ENCODE measurements at regions of chr2 and their contacts with region 1.

Region 1: DNA sequence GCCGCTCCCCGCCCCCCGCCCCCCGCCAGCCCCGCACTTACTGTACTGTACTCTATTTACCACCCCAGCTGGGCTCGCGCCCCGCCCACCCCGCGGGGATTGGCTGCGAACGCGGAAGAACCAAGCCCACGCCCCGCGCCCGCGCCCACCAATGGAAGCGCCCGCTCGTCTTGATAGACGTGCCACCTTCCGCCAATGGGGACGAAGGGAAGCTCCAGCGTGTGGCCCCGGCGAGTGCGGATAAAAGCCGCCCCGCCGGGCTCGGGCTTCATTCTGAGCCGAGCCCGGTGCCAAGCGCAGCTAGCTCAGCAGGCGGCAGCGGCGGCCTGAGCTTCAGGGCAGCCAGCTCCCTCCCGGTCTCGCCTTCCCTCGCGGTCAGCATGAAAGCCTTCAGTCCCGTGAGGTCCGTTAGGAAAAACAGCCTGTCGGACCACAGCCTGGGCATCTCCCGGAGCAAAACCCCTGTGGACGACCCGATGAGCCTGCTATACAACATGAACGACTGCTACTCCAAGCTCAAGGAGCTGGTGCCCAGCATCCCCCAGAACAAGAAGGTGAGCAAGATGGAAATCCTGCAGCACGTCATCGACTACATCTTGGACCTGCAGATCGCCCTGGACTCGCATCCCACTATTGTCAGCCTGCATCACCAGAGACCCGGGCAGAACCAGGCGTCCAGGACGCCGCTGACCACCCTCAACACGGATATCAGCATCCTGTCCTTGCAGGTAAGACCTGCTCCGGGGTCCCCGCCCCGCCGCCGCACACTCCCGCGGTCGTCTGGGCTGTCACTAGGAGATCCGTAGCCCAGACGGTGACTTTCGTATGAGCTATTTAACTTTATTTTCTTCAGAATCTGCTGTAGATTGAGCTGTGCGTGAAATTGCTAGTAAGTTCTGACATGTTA is at the start of gene ID2:
- DNase-seq: peak; percentile 100
- ATAC-seq: peak; percentile 67 to 72
- total RNA-seq, gene ID2: 47.5 to 68.2 TPM

Region 2: GRCh38 chr2:7203055-7203467 is 1479.0 kb before region 1 on chr2:
- intact Hi-C with region 1: loop called in 1 of 2 experiments (anchors 5 kb)
- DNase-seq: no peak
- ATAC-seq: peak; percentile 55 to 57

Region 3: GRCh38 chr2:7427293-7428060 is 1254.6 kb before region 1 on chr2:
- intact Hi-C with region 1: loop called in 1 of 2 experiments (anchors 2 kb)
- DNase-seq: no peak
- ATAC-seq: peak in 1 of 2 donors; percentile 46

Region 4: GRCh38 chr2:8004250-8004681 is 677.8 kb before region 1 on chr2:
- intact Hi-C with region 1: loop called in 1 of 2 experiments (anchors 5 kb)
- DNase-seq: no peak
- ATAC-seq: peak; percentile 69 to 88

Region 5: GRCh38 chr2:8103083-8103708 is 578.8 kb before region 1 on chr2:
- intact Hi-C with region 1: no loop called
- DNase-seq: no peak
- ATAC-seq: no peak

Region 6: DNA sequence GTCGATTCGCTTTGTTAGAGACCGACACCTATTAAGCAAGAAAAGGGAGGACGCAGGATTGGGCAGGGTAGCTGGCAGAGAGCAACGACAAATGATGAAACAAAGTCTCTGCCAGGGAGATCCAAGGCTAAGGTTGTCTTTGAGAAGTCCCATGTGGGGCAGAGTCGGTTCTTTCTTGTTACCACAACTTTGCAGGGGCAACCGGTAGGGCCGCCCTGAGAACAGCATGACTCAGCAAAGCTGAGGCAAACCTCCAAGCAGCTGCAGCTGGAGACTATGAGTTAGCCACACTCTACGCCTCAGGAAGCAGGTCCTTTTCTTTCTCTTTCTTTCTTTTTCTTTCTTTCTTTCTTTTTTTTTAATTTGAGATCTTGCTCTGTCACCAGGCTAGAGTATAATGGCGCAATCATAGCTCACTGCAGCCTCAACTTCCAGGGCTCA is 452.5 kb before region 1 on chr2:
- intact Hi-C with region 1: loop called in 1 of 2 experiments (anchors 10 kb)
- DNase-seq: peak; percentile 62
- ATAC-seq: peak; percentile 83 to 91

Region 7: GRCh38 chr2:8438476-8438875 is 243.6 kb before region 1 on chr2:
- intact Hi-C with region 1: loop called in 1 of 2 experiments (anchors 10 kb)
- DNase-seq: no peak
- ATAC-seq: peak; percentile 10 to 35

Region 8: GRCh38 chr2:8615576-8616281 is 66.3 kb before region 1 on chr2:
- intact Hi-C with region 1: loop called in 1 of 2 experiments (anchors 1 kb)
- DNase-seq: peak; percentile 59
- ATAC-seq: peak; percentile 68 to 90

Region 9: DNA sequence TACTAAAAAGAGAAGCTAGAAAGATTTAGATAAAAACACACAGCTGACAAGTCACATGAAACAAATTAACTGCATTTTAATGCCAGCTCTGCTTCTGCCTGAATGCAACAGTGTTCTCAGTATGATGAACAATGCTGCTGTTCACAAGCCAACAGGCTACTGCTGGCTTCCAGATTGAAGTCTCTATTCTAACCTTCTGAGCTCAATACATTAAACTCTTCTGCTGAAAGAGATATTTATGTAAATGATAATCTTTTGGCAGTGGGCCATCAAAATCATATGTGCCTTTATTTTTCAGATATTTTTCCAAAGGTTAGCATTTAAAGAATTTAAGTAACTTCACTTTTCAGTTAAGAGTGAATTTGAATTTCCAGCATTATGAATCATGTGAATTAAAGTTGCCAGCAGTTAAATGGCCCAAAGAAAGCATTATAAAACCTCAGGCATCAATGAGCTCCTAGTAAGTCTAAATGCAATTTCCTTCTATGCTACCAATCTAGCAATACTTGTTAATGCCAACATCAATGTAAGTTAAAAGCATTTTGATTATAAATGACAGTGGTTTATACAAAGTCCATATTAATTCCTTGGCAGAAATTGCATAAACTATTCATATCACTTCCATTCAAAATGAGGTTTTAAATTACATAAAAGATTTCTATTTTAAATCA is 72.2 kb after region 1 on chr2:
- intact Hi-C with region 1: no loop called
- DNase-seq: no peak
- ATAC-seq: peak in 1 of 2 donors; percentile 67

Measured in left cardiac atrium (tissue), 4 donors.